ENCODE measurements at regions of chr16 and their contacts with region 1.

Region 1: DNA sequence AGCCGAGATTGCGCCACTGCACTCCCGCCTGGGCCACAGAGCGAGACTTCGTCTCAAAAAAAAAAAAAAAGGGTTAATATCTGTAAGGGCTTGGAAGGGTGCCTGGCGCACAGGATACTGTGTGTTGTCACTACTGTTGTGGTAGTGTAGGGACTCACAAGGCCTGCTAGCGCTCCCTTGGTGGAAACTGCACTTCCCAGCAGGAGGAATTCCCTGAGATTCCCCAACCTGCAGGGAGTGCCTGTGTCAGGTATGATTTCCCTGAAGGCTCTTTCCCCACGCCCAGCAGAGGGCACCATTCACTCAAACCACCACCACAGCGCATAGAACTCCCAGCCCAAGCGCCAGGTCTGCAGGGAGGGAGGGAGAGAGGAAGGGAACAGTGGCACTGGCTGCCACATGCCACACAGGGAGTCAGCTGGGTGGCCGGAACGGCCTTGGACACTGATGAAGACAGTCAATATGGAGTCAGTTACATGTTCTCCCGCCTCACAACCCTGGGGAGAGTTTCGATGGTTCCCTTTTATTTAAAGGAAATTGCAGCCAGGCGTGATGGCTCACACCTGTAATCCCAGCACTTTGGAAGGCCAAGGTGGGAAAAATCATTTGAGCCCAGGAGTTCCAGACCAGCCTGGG is 32.7 kb upstream of the CDH1 start:
- DNase-seq: peak; percentile 85
- H3K4me3 Mint-ChIP-seq: no peak overlapping the region
- H3K27ac Mint-ChIP-seq: no peak overlapping the region
- H3K4me1 Mint-ChIP-seq: peaks cover 3% of the 10 kb centered on the region
- H3K27me3 Mint-ChIP-seq: no peaks in the 10 kb centered on the region

Region 2: DNA sequence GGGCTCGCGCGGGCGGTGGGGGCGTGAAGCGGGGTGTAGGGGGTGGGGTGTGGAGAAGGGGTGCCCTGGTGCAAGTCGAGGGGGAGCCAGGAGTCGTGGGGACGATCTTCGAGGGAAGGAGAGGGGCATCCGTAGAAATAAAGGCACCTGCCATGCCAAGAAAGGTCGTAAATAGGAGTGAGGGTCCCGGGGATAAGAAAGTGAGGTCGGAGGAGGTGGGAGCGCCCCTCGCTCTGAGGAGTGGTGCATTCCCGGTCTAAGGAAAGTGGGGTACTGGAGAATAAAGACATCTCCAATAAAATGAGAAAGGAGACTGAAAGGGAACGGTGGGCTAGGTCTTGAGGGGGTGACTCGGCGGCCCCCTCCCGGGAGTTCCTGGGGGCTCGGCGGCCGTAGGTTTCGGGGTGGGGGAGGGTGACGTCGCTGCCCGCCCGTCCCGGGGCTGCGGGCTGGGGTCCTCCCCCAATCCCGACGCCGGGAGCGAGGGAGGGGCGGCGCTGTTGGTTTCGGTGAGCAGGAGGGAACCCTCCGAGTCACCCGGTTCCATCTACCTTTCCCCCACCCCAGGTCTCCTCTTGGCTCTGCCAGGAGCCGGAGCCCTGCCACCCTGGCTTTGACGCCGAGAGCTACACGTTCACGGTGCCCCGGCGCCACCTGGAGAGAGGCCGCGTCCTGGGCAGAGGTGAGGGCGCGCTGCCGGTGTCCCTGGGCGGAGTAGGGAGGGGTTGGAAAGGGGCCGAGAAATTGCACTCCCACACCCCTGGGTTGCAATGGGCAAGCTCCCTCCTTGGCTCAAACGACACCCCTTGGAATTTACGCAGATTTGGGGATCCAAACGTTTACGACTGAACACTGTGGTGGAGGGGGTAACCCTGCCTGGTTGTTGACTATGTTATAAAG is 33.6 kb after region 1 on chr16:
- CTCF ChIA-PET with region 1: no interaction called
- intact Hi-C with region 1: loop called (anchors 1 kb)
- DNase-seq: peak; percentile 45
- H3K4me3 Mint-ChIP-seq: peak overlapping the region; percentile 52
- H3K27ac Mint-ChIP-seq: no peak overlapping the region
- H3K4me1 Mint-ChIP-seq: peaks cover 13% of the 10 kb centered on the region
- H3K27me3 Mint-ChIP-seq: peaks cover 42% of the 10 kb centered on the region

Region 3: GRCh38 chr16:68800257-68800875 is 96.0 kb after region 1 on chr16:
- CTCF ChIA-PET with region 1: interaction called, 31 read pairs
- intact Hi-C with region 1: loop called (anchors 1 kb)
- DNase-seq: peak; percentile 86
- H3K4me3 Mint-ChIP-seq: no peak overlapping the region
- H3K27ac Mint-ChIP-seq: peak overlapping the region; percentile 30
- H3K4me1 Mint-ChIP-seq: peaks cover 3% of the 10 kb centered on the region
- H3K27me3 Mint-ChIP-seq: no peaks in the 10 kb centered on the region

Region 4: GRCh38 chr16:69123910-69124309 is 419.6 kb after region 1 on chr16:
- CTCF ChIA-PET with region 1: no interaction called
- intact Hi-C with region 1: loop called (anchors 1 kb)
- DNase-seq: peak; percentile 74
- H3K4me3 Mint-ChIP-seq: no peak overlapping the region
- H3K27ac Mint-ChIP-seq: no peak overlapping the region
- H3K4me1 Mint-ChIP-seq: peaks cover 18% of the 10 kb centered on the region
- H3K27me3 Mint-ChIP-seq: no peaks in the 10 kb centered on the region